Mucosa of descending colon (tissue), 3 donors: ENCODE measurements at regions of chr1 and their contacts with region 1.

Region 1: GRCh38 chr1:203625628-203626019 is 1.0 kb upstream of the ATP2B4 start:
- DNase-seq: peak in 1 of 3 donors; percentile 82
- ATAC-seq: peak; percentile 72
- H3K4me3 ChIP-seq: no peak overlapping the region
- H3K4me1 ChIP-seq: peaks cover 28% of the 10 kb centered on the region
- CTCF ChIP-seq: no peak

Region 2: DNA sequence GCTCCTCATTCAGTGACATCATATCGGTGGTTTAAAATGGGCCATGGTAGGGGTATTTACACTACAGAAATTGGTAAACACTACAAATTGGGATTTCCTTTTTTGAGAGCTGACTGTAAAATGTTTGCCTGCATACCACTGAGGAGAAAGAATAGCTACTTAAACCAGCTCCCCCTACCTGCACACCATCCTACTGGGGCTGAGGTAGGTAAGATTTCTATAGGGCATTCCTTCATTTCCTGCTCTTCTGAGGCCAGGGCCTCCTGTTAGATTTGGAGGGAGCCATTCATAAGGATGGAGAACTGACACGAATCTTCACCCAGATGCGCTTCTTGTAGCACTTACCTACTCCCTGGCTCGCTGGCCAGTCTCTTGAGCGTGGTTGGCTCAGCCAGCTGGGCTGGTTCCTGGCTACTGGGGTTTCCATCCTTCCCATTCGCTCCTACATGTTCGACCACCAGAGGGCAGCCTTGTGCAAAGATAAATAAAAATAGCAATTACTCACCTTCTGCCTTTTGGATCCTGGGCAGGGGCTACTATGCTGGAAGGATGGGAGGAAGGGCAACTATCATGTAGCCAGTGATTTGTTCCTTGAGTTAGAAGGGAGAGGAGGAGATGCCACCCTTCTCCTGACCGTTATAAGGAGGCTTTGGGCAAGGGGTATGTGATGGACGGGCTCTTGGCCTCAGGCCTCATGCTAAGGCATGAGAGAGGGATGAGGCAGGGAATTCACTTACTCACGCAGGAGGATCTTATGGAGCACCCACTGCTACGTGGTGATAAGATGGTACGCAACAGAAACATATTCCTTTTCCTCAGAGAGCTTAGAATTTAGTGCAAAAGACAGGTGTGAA is 121.0 kb before region 1 on chr1:
- intact Hi-C with region 1: loop called in 1 of 2 experiments (anchors 10 kb)
- DNase-seq: peak in 2 of 3 donors; percentile 73 to 93
- ATAC-seq: peak; percentile 90
- H3K4me3 ChIP-seq: no peak overlapping the region
- H3K4me1 ChIP-seq: no peaks in the 10 kb centered on the region
- CTCF ChIP-seq: peak; percentile 62

Region 3: GRCh38 chr1:203702130-203702577 is 76.5 kb after region 1 on chr1:
- intact Hi-C with region 1: loop called in 1 of 2 experiments (anchors 10 kb)
- DNase-seq: peak in 2 of 3 donors; percentile 47 to 79
- ATAC-seq: peak; percentile 69
- H3K4me3 ChIP-seq: no peak overlapping the region
- H3K4me1 ChIP-seq: no peaks in the 10 kb centered on the region
- CTCF ChIP-seq: peak; percentile 27